Heart right ventricle (tissue), 16 donors: ENCODE measurements at regions of chr7 and their contacts with region 1.

Region 1: GRCh38 chr7:105268511-105269392 is 120.0 kb downstream of the SRPK2 start:
- DNase-seq: peak in 1 of 2 donors; percentile 30
- ATAC-seq: peak; percentile 85 to 97 (median 92)
- H3K4me3 ChIP-seq: peak overlapping the region; percentile 26 to 57 (median 49)
- H3K27ac ChIP-seq: peak overlapping the region; percentile 3 to 83 (median 73)
- H3K4me1 ChIP-seq: peaks cover 0 to 44% (median 32%) of the 10 kb centered on the region in 9 donors
- H3K27me3 ChIP-seq: no peaks in the 10 kb centered on the region
- CTCF ChIP-seq: no peak

Region 2: GRCh38 chr7:105156731-105157130 is 112.0 kb before region 1 on chr7:
- intact Hi-C with region 1: loop called in 1 of 10 experiments (anchors 10 kb)
- DNase-seq: no peak
- ATAC-seq: no peak
- H3K4me3 ChIP-seq: no peak overlapping the region
- H3K27ac ChIP-seq: no peak overlapping the region
- H3K4me1 ChIP-seq: peaks cover 0 to 20% (median 14%) of the 10 kb centered on the region in 9 donors
- H3K27me3 ChIP-seq: no peaks in the 10 kb centered on the region
- CTCF ChIP-seq: no peak